Activated CD4-positive, alpha-beta memory T cell treated with anti-CD3 and anti-CD28 coated beads, Interleukin-2, amount 10 ng/mL, durations not matched to agents 7 days and 5 days (primary cell): ENCODE measurements at regions of chr12 and their contacts with region 1.

Region 1: DNA sequence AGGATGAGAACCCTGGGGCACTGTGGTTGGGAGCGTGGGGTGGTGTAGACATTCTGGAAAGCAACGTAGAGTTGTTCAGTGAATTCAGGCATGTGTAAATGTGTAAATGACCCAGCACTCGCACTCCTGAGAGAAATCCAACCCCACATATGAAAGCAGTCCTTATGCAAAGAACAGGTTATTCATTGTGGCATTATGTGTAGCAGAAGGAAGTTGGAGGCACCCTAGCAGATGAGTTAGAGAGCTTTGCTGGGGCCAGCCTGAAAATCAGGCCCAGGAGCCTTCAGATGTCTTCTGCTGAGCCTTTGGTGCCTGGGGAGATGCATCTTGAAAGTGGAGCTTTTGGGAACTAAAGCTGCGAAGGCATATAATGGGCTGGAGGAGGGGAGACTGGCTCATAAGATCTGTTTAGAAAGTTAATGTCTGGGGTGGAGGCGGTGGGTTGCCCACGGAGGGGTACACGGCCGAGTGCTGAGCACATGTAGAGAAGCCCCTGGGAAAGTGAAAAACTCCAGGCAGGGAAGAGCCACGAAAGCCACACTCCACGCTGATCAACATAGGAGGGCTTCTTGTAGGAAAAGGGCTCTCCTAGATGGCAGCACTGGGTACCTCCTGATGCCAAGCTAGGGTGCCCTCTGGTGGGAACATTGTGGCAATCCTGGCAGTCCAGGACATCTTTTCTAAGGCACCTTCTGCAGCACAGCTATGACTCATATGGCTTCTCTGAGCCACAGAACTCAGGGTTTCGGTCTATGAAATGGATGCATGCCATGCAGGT is 6.0 kb upstream of the KRT83 start:
- DNase-seq: peak; percentile 83
- H3K4me3 Mint-ChIP-seq: no peak overlapping the region
- H3K27ac Mint-ChIP-seq: peak overlapping the region; percentile 13
- H3K4me1 Mint-ChIP-seq: peaks cover 16% of the 10 kb centered on the region
- H3K27me3 Mint-ChIP-seq: peaks cover 34% of the 10 kb centered on the region

Region 2: GRCh38 chr12:51959211-51959610 is 368.0 kb before region 1 on chr12:
- CTCF ChIA-PET with region 1: no interaction called
- POLR2A ChIA-PET with region 1: no interaction called
- DNase-seq: no peak
- H3K4me3 Mint-ChIP-seq: no peak overlapping the region
- H3K27ac Mint-ChIP-seq: no peak overlapping the region
- H3K4me1 Mint-ChIP-seq: peaks cover under 1% of the 10 kb centered on the region
- H3K27me3 Mint-ChIP-seq: peaks cover under 1% of the 10 kb centered on the region

Region 3: GRCh38 chr12:52139552-52140062 is 187.6 kb before region 1 on chr12:
- CTCF ChIA-PET with region 1: interaction called, 12 read pairs
- POLR2A ChIA-PET with region 1: no interaction called
- DNase-seq: peak; percentile 49
- H3K4me3 Mint-ChIP-seq: no peak overlapping the region
- H3K27ac Mint-ChIP-seq: no peak overlapping the region
- H3K4me1 Mint-ChIP-seq: no peaks in the 10 kb centered on the region
- H3K27me3 Mint-ChIP-seq: peaks cover 11% of the 10 kb centered on the region

Region 4: DNA sequence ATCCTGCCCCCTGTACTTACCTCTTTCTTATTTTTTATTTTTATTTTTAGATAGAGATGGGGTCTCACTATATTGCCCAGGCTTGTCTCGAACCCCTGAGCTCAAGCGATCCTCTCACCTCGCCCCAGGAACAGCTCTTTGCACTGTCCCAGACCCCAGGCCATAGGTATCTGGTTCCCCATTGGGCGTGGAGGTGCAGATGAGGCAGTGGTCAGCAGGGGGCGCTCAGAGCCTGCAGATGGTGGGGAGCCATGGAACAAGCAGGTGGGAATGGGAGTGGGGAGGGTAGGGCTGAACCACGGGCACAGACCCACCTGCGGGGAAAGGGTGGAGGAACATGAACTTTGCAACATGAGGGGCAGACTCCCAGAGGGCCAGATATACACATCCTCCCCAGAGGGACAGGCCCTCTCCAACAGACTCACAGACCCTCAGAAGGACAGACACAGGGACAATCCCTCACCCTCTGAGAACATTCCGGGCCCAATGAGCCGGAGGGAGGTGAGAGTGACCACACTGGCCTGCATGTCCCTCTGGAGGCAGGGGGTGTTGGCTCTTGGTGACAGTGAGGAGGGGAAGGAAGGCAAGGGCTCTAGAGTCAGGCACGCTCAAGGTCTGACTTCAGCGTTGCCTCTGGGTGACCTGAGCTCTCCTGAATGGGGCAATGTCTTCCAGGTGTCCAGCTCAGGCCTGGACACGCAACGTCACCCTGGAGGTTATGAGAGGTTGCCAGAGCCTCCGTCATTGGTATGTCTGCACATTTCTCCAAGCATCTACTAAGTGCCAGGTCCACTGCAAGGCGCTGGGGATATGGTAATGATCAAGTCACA is 170.3 kb before region 1 on chr12:
- CTCF ChIA-PET with region 1: interaction called, 34 read pairs
- POLR2A ChIA-PET with region 1: interaction called, 3 read pairs
- DNase-seq: peak; percentile 80
- H3K4me3 Mint-ChIP-seq: no peak overlapping the region
- H3K27ac Mint-ChIP-seq: no peak overlapping the region
- H3K4me1 Mint-ChIP-seq: peaks cover 46% of the 10 kb centered on the region
- H3K27me3 Mint-ChIP-seq: no peaks in the 10 kb centered on the region

Region 5: DNA sequence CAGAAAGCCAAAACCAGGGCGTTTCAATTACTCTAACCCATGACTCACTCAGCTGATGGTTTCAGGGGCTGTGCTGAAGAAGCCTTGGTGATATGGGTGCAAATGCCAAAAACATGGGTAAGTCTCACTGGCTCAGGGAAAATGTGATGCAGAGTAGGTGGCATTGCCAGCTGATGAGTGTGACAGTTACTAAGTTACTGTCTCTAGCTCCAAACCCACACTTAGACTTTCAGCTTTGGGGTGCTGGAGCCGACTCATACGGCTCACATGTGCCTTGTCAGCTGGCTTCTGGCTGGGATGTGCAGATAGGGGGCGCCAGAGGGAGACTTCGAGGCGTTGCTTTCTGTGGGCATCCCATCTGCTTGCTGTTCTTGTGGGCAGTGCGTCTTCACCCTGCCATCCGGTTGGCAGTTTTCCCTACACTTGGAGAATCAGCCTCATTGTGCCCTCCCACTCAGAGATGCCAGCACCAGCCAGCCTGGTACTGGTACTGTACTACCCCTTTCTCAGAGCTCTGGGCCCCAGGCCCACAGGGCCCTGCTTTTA is 105.3 kb before region 1 on chr12:
- CTCF ChIA-PET with region 1: interaction called, 13 read pairs
- POLR2A ChIA-PET with region 1: no interaction called
- DNase-seq: peak; percentile 85
- H3K4me3 Mint-ChIP-seq: no peak overlapping the region
- H3K27ac Mint-ChIP-seq: no peak overlapping the region
- H3K4me1 Mint-ChIP-seq: peaks cover 15% of the 10 kb centered on the region
- H3K27me3 Mint-ChIP-seq: peaks cover 53% of the 10 kb centered on the region

Region 6: DNA sequence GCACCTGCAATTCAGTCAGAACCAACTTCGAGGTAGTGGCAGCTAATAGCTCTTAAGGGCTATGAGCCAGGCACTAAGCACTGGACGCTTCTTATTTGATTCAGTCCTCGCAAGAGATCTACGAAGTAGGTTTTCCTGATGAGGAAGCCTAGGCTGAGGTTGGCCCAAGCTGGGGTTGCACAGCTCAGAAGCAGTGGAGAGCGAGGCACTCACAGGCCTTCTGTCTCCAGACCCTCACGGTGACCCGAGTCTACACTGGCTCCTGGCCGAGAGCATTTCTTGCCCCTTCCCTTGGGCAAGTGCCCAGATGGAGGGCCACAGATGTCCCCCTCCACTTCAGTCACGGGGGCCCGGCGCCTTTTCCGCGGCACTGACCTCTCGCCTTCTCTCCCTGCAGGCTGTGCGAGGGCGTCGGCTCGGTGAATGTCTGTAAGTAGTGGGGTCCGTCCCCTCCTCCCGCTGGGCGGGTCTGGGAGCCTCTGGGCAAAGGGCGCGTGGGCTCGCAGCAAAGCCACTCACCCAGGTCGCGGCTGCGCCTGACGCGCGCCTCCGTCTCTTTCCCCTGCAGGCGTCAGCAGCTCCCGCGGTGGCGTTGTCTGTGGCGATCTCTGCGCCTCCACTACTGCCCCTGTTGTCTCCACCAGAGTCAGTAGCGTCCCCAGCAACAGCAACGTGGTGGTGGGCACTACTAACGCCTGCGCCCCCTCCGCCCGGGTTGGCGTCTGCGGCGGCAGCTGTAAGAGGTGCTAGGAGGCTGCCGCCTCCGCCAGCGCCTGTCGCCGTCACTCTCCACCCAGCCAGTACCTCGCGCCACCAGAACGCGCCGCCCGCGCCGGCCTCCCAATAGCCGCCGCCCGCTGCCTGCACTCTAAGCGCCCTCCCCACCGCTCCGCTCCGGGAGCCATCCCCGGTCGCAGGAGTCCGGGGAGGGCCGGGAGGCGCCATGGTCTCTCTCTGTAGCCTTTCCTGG is 19.1 kb before region 1 on chr12:
- CTCF ChIA-PET with region 1: interaction called, 13 read pairs
- POLR2A ChIA-PET with region 1: no interaction called
- DNase-seq: peak; percentile 49
- H3K4me3 Mint-ChIP-seq: peak overlapping the region; percentile 52
- H3K27ac Mint-ChIP-seq: no peak overlapping the region
- H3K4me1 Mint-ChIP-seq: peaks cover 24% of the 10 kb centered on the region
- H3K27me3 Mint-ChIP-seq: peaks cover 60% of the 10 kb centered on the region

Region 7: DNA sequence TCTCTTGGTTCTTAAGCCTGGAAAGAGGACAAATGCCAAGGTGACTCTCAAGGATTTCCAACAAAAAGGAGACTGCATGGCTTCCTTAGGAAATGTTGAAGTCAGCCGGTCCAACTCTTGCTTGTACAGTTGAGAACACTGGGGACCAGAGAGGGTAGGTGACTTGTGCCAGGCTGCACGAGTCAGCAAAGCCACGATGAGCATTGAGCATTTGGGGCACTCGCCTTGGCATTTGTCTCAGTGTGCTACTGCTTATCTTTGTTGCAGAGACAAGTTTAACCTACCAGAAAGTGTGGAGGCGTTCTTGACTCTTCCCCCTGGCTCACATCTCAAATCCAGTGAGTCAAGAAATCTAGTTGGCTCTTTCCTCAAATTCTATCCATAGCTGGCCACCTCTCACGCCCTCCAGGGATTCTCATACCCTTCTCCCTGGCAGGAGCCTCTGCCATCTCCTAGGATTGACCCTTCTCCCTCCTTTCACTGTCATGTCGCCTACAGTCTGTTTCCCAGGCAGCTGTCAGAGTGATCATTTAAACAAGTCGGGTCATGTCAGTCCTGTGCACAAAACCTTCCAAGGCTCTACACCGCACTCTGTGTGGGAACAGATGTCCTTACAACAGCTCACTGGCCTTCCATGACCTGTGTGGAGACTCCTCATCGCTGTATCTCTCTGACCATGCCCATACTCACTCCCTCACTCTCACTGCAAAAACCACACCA is 11.2 kb after region 1 on chr12:
- CTCF ChIA-PET with region 1: interaction called, 10 read pairs
- POLR2A ChIA-PET with region 1: no interaction called
- DNase-seq: no peak
- H3K4me3 Mint-ChIP-seq: no peak overlapping the region
- H3K27ac Mint-ChIP-seq: no peak overlapping the region
- H3K4me1 Mint-ChIP-seq: peaks cover 8% of the 10 kb centered on the region
- H3K27me3 Mint-ChIP-seq: peaks cover 14% of the 10 kb centered on the region

Region 8: DNA sequence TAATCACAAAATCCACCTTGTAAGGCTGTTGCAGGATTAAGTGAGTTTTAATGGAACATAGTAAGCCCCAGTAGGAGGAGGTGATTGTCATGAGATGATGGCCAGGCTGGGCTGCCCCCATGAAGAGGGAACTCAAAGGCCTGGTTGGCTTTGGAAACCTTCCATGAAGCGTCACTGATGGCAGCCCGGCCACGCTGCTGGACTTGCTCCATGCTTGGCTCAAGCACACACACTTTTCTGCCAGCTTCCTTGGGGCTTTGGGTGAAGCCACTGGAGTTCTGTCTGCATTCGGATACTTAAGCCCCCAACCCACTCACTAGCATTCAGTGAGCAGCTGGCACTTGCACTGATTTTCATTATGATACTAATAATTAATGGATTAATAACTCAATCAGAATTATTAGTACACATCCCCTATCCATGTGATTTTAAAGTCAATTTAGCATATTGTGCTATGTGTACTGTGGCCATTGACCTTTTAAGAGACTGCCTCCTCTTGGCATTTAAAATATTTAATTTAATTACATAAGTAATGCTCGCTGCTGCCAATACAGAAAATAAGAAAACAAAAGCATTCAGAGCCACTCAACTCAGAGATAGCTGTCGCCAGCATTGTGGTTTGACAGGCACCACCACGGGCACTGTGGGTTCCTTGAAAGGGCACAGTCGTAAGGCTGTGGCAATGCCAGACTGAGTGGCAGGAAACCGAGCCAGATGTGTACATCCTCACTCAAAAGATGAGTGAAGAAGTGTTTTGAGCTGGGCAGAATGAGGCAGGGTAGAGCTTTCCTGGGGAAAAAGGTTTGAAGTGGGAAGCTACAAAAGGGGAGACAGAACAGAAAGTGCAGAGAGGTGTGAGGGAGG is 24.2 kb after region 1 on chr12:
- CTCF ChIA-PET with region 1: interaction called, 18 read pairs
- POLR2A ChIA-PET with region 1: interaction called, 3 read pairs
- DNase-seq: peak; percentile 71
- H3K4me3 Mint-ChIP-seq: no peak overlapping the region
- H3K27ac Mint-ChIP-seq: no peak overlapping the region
- H3K4me1 Mint-ChIP-seq: peaks cover 8% of the 10 kb centered on the region
- H3K27me3 Mint-ChIP-seq: peaks cover 40% of the 10 kb centered on the region

Region 9: DNA sequence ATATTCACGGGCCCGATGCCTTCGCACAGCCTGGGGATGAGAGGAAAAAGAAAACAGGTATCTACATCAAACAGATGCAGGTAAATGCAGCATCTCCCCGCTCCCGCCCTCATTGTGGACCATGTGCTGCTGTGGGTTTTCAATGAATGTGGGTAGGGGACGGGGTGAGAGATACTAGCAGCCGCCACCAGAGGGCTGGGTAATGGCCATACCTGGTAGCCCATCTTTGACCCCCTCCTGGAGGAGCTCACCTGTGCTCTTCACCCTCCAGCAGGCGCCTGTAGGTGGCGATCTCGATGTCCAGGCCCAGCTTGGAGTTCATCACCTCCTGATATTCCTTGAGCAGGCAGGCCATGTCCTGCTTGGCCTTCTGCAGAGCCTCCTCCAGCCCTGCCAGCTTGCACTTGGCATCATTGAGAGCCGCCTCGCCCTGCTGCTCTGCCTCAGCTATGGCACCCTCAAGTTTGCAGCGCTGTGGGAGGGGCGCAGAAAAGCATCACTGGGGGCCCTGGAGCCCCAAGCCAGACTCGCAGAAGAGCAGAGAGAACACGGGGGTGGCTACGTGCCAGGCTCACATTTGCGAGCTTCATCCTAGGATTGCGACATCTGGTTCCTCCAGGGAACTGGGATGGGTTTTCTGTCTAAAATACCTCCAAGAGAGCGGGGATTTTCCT is 68.7 kb after region 1 on chr12:
- CTCF ChIA-PET with region 1: no interaction called
- POLR2A ChIA-PET with region 1: no interaction called
- DNase-seq: no peak
- H3K4me3 Mint-ChIP-seq: no peak overlapping the region
- H3K27ac Mint-ChIP-seq: no peak overlapping the region
- H3K4me1 Mint-ChIP-seq: no peaks in the 10 kb centered on the region
- H3K27me3 Mint-ChIP-seq: peaks cover 7% of the 10 kb centered on the region